ENCODE measurements at regions of chr22 and their contacts with region 1.

Region 1: DNA sequence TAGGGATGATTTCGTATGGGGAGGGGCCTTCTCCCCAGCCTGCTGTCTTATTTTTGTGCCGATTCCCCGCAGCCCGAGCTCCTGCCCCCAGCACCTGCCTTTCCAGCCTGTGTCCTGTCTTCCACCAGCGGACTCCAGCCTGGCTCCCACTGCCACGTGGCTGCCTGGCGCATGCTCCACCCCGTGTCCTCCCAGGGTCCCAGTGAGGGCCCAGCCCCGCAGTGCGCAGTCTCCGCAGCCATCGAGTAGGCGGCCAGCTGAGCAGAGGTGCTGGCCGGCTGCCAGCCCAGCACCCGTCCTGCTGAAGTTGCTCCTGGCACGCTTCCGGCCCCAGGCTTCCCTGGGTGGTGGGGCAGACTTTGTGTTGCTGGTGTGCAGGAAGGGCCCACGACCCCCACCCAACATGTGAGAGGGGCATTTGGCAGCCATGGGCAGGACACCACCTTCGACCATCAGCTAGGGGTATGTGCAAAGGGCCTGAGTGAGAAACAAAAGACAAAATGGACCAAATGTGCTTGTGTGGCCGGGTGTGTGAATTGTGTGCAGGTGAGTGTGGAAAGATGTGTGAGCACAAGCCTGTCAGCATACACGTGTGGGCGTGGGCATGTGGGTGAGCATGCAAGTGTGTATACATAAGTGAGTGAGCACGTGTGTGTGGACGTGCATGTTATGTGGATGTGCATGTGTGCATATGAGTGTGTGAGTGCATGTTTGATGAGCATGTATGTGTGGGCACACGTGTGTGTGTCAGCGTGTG is 55.9 kb downstream of the RTN4R start:
- DNase-seq: peak; percentile 13
- H3K4me3 ChIP-seq: no peak overlapping the region
- H3K27ac ChIP-seq: no peak overlapping the region
- H3K4me1 ChIP-seq: peaks cover 20% of the 10 kb centered on the region
- H3K27me3 ChIP-seq: no peaks in the 10 kb centered on the region
- CTCF ChIP-seq: no peak

Region 2: DNA sequence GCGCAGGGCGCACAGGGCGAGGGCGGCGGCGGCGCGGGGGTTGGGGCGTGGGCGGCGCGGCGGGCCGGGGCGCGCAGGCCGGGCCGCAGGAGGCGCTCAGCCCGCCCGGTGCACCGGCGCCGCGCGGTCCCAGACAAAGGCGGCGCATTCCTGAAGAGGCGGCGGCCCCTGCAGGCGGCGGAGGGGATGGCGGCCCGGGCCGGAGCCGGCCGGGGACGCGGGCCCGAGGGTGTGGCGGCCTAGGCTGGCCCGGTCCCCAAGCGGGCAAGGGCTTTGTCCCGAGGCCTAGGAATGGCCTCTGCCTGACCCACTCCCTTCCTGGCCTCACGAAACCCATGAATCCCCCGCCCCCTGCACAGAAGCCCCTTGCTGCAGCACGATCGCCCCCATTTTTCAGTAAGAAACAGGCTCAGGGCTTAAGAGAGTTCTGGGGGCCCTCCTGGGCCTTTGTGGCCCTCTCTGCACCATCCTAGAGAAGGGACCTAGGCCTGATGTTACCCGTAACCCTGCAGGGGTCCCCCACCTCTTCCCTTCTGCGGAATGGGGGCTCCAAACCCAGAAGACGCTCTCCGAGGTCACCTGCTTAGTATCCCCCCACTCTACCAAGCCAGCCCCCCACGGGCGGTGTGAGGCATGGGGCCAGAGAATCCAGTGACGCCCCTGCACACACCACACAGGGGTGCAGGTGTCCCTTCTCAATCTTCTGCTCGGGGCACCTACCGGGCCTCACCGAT is 56.3 kb after region 1 on chr22 and contains the start of gene RTN4R:
- CTCF ChIA-PET with region 1: no interaction called
- dilution Hi-C with region 1: loop called (anchors 5 kb)
- in situ Hi-C with region 1: no loop called
- intact Hi-C with region 1: no loop called
- DNase-seq: peak; percentile 41
- H3K4me3 ChIP-seq: peak within 1 kb of the TSS; percentile 59 to 60 (median 60)
- H3K27ac ChIP-seq: no peak within 1 kb of the TSS
- H3K4me1 ChIP-seq: peaks cover 6% of the 10 kb centered on the region
- H3K27me3 ChIP-seq: no peaks in the 10 kb centered on the region
- CTCF ChIP-seq: peak; percentile 34 to 56
- total RNA-seq, gene RTN4R: 3.8 to 10.5 TPM

Measured in mammary epithelial cell (primary cell).